ENCODE measurements at regions of chr6 and their contacts with region 1.

Region 1: DNA sequence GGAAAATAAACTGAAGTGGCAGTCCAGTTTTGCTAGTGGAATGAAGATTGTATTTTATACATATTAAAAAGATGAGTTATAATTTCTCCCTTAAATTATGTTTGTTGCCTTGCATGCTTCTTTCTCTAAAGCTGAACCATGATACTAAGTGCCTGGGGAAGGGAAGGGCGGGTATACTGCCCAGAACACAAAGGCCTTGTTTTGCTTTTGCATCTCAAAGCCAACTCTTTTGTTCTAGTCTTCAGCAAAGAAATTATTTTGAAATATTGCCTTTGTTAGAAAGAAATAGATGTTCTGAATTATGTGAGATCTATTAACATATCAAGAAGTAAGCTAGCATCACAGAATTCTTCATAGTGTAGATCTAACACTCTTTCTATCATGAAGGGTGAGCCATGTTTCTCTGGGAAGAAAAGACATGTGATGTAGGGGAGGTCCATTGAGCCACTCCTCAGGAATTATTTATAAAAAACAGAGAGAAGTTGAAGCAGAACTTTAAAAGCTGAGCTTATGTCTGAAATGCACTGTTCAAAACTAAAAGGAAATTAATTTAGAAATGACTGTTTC is 108.4 kb downstream of the RIMS1 start:
- DNase-seq: no peak

Region 2: GRCh38 chr6:72022830-72023229 is 28.0 kb after region 1 on chr6:
- intact Hi-C with region 1: loop called in 1 of 2 experiments (anchors 1 kb)
- DNase-seq: no peak

Measured in posterior vena cava (tissue), 2 donors.